IMR-90 (cell line): ENCODE measurements at regions of chr2 and their contacts with region 1.

Region 1: GRCh38 chr2:11629851-11630250 is 40.1 kb downstream of the NTSR2 start:
- DNase-seq: no peak
- ATAC-seq: no peak
- H3K4me3 ChIP-seq: no peak overlapping the region
- H3K27ac ChIP-seq: no peak overlapping the region
- H3K4me1 ChIP-seq: no peaks in the 10 kb centered on the region
- H3K27me3 ChIP-seq: peaks cover 35% of the 10 kb centered on the region
- CTCF ChIP-seq: no peak
- POLR2A ChIP-seq: no peak
- RAD21 ChIP-seq: no peak

Region 2: GRCh38 chr2:11642974-11643373 is 13.1 kb after region 1 on chr2:
- CTCF ChIA-PET with region 1: interaction called, 5 read pairs
- POLR2A ChIA-PET with region 1: interaction called, 17 read pairs
- dilution Hi-C with region 1: no loop called
- in situ Hi-C with region 1: no loop called
- intact Hi-C with region 1: no loop called
- DNase-seq: no peak
- ATAC-seq: no peak
- H3K4me3 ChIP-seq: no peak overlapping the region
- H3K27ac ChIP-seq: no peak overlapping the region
- H3K4me1 ChIP-seq: no peaks in the 10 kb centered on the region
- H3K27me3 ChIP-seq: peaks cover 30% of the 10 kb centered on the region
- CTCF ChIP-seq: no peak
- POLR2A ChIP-seq: no peak
- RAD21 ChIP-seq: no peak

Region 3: DNA sequence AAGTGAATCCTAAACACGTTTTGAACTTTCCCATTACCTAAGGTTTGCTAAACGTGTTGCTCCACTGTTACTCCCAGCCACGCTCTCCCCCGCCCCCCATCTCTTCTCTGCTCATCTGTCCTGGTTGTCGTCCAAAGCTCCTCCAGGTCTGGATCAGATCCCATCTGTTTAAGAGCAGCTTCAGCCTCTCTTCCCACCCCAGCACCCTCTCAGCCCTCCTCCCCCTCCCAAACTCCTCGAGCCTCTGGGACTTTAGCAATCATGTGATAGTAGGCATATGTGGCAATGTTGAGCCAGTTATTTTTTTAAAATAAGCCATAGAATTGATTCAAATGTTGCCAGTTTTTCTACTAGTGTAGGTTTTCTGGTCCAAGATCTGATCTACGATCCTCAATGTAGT is 96.5 kb after region 1 on chr2:
- CTCF ChIA-PET with region 1: no interaction called
- POLR2A ChIA-PET with region 1: no interaction called
- dilution Hi-C with region 1: no loop called
- in situ Hi-C with region 1: no loop called
- intact Hi-C with region 1: no loop called
- DNase-seq: no peak
- ATAC-seq: no peak
- H3K4me3 ChIP-seq: no peak overlapping the region
- H3K27ac ChIP-seq: no peak overlapping the region
- H3K4me1 ChIP-seq: peaks cover 2% of the 10 kb centered on the region; the same call in 1 of the 2 replicates
- H3K27me3 ChIP-seq: peaks cover 61% of the 10 kb centered on the region
- CTCF ChIP-seq: no peak
- POLR2A ChIP-seq: no peak
- RAD21 ChIP-seq: no peak